ENCODE measurements at regions of chr17 and their contacts with region 1.

Region 1: DNA sequence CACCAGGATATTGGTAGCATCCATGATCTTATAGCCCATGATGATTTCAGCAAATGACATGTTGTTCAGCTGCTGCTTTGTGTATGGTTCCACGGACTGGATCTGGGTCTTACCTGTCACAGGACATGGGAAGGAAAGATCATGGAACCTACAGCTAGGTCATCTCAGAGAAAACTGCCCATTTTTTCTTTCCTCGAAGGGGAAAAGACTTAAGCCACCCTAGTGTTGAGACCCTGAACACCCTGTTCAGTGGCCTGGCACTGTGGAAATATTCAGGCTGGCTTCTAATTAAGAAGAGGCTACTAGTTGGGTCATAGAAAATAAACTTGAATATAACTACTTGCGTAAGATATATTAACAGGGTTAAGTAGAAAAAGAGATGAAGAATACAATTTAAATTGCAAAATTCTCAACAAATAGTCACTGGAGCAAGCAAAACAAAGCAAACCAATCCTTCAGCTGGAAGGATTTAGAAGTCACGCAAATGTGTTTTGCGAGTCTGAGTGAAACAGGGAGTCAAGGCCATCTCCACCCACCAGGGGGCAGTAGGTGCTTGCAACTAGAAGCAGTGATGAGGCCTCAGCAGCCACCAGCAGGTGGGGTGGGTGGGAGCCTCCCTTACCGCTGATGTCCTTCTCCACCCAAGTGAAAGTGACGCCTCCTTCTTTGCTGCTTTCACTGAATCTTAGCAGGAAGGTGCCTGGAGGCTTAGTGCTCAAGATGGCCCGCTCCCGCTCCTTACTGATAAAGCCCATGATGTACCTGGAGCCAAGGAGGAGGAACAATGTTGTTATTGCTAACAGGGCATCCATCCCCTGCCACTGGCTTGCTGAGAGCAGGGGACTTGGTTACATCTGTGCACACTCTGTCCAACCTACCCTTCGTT is 34.3 kb downstream of the STAT5A start:
- DNase-seq: peak; percentile 94
- ATAC-seq: peak; percentile 87
- H3K4me3 ChIP-seq: no peak overlapping the region
- H3K27ac ChIP-seq: peak overlapping the region; percentile 73; the same call in 1 of the 2 replicates
- H3K4me1 ChIP-seq: peaks cover 13% of the 10 kb centered on the region
- H3K27me3 ChIP-seq: no peaks in the 10 kb centered on the region
- CTCF ChIP-seq: peak; percentile 100
- POLR2A ChIP-seq: peak; percentile 71
- RAD21 ChIP-seq: peak; percentile 99

Region 2: GRCh38 chr17:42358434-42358833 is 35.8 kb after region 1 on chr17:
- CTCF ChIA-PET with region 1: no interaction called
- POLR2A ChIA-PET with region 1: no interaction called
- dilution Hi-C with region 1: no loop called
- in situ Hi-C with region 1: no loop called
- intact Hi-C with region 1: no loop called
- DNase-seq: no peak
- ATAC-seq: 0 out of 2 replicates have a peak, but pooled peaks have one; percentile 13
- H3K4me3 ChIP-seq: no peak overlapping the region
- H3K27ac ChIP-seq: no peak overlapping the region
- H3K4me1 ChIP-seq: peaks cover 5% of the 10 kb centered on the region
- H3K27me3 ChIP-seq: no peaks in the 10 kb centered on the region
- CTCF ChIP-seq: no peak
- POLR2A ChIP-seq: no peak
- RAD21 ChIP-seq: no peak

Region 3: GRCh38 chr17:42388381-42389134 is 65.9 kb after region 1 on chr17 and contains the start of gene STAT3:
- CTCF ChIA-PET with region 1: no interaction called
- POLR2A ChIA-PET with region 1: no interaction called
- dilution Hi-C with region 1: no loop called
- in situ Hi-C with region 1: no loop called
- intact Hi-C with region 1: loop called (anchors 1 kb)
- DNase-seq: peak; percentile 100
- ATAC-seq: peak; percentile 97
- H3K4me3 ChIP-seq: peak within 1 kb of the TSS; percentile 99
- H3K27ac ChIP-seq: peak within 1 kb of the TSS; percentile 92
- H3K4me1 ChIP-seq: peaks cover 6% of the 10 kb centered on the region
- H3K27me3 ChIP-seq: no peaks in the 10 kb centered on the region
- CTCF ChIP-seq: no peak; the same call in 1 of the 2 replicates
- POLR2A ChIP-seq: peak; percentile 79
- RAD21 ChIP-seq: peak; percentile 26; the same call in 1 of the 2 replicates
- total RNA-seq, gene STAT3: 61.9 and 66.3 TPM in 2 replicates

Region 4: GRCh38 chr17:42405963-42406495 is 83.4 kb after region 1 on chr17:
- CTCF ChIA-PET with region 1: interaction called, 5 read pairs
- POLR2A ChIA-PET with region 1: no interaction called
- dilution Hi-C with region 1: no loop called
- in situ Hi-C with region 1: loop called (anchors 5 kb)
- intact Hi-C with region 1: loop called (anchors 1 kb)
- DNase-seq: peak; percentile 59
- ATAC-seq: peak; percentile 38
- H3K4me3 ChIP-seq: no peak overlapping the region
- H3K27ac ChIP-seq: 0 out of 2 replicates have a peak overlapping the region, but pooled peaks have one; percentile 1
- H3K4me1 ChIP-seq: peaks cover 41% of the 10 kb centered on the region
- H3K27me3 ChIP-seq: no peaks in the 10 kb centered on the region
- CTCF ChIP-seq: peak; percentile 87
- POLR2A ChIP-seq: no peak
- RAD21 ChIP-seq: peak; percentile 87

Region 5: GRCh38 chr17:42459256-42459800 is 136.7 kb after region 1 on chr17:
- CTCF ChIA-PET with region 1: interaction called, 3 read pairs
- POLR2A ChIA-PET with region 1: interaction called, 27 read pairs
- dilution Hi-C with region 1: no loop called
- in situ Hi-C with region 1: no loop called
- intact Hi-C with region 1: no loop called
- DNase-seq: peak; percentile 69
- ATAC-seq: peak; percentile 37
- H3K4me3 ChIP-seq: peak overlapping the region; percentile 80
- H3K27ac ChIP-seq: peak overlapping the region; percentile 42; the same call in 1 of the 2 replicates
- H3K4me1 ChIP-seq: peaks cover 12% of the 10 kb centered on the region
- H3K27me3 ChIP-seq: no peaks in the 10 kb centered on the region
- CTCF ChIP-seq: peak; percentile 38
- POLR2A ChIP-seq: no peak
- RAD21 ChIP-seq: no peak

Region 6: GRCh38 chr17:42527273-42527703 is 204.7 kb after region 1 on chr17:
- CTCF ChIA-PET with region 1: interaction called, 4 read pairs
- POLR2A ChIA-PET with region 1: interaction called, 4 read pairs
- dilution Hi-C with region 1: no loop called
- in situ Hi-C with region 1: loop called (anchors 5 kb)
- intact Hi-C with region 1: loop called (anchors 1 kb)
- DNase-seq: peak; percentile 83
- ATAC-seq: peak; percentile 79
- H3K4me3 ChIP-seq: no peak overlapping the region
- H3K27ac ChIP-seq: peak overlapping the region; percentile 51
- H3K4me1 ChIP-seq: peaks cover 30% of the 10 kb centered on the region
- H3K27me3 ChIP-seq: no peaks in the 10 kb centered on the region
- CTCF ChIP-seq: peak; percentile 89
- POLR2A ChIP-seq: 0 out of 2 replicates have a peak, but pooled peaks have one; percentile 43
- RAD21 ChIP-seq: peak; percentile 98

Measured in IMR-90 (cell line).